B cell (primary cell): ENCODE measurements at regions of chr10 and their contacts with region 1.

Region 1: GRCh38 chr10:63629363-63630084 is 108.3 kb downstream of the REEP3 start:
- DNase-seq: peak; percentile 89
- ATAC-seq: peak; percentile 56
- H3K4me3 ChIP-seq: peak overlapping the region; percentile 65 to 88 (median 81)
- H3K4me3 Mint-ChIP-seq: peak overlapping the region; percentile 97
- H3K27ac ChIP-seq: peak overlapping the region; percentile 61 to 66
- H3K27ac Mint-ChIP-seq: peak overlapping the region; percentile 96
- H3K4me1 ChIP-seq: peaks cover 17 to 28% of the 10 kb centered on the region in 2 donors
- H3K4me1 Mint-ChIP-seq: peaks cover 24% of the 10 kb centered on the region
- H3K27me3 ChIP-seq: no peaks in the 10 kb centered on the region
- H3K27me3 Mint-ChIP-seq: no peaks in the 10 kb centered on the region
- CTCF ChIP-seq: peak; percentile 90

Region 2: DNA sequence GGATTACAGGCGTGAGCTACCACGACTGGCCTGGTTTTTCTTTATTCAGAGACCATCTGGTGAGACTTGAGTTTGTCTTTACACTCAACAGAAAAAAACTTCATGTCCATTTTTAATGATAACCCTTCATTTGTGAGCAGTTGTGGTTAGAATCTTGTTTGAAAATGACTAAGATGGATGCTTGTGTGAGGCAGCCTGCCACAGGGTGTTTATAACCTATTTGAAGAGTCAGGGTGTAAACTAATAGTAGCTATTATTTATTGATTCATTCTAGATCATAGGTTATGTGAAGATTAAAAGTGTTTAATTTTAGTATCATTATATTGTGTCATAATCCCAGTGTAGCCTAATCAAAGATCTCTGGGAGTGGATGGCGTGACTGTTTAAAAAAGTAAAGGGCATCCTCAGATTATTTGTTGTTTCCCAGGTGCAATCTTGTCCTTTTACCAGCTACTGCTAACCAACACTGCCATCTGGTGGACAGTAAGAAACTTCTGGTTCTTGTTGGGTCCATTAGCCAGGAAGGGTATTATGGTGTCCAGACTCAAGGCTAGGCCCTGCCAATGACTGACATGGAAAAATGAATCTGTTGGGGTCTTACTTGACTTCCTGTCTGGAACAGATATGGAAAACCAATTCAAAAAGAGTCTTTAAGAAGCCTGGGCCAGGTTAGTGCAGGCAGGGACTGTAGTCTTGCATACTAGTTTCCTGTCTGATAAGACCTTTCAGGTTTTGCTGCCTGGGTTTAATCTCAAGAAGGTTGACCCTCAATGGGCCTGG is 471.5 kb before region 1 on chr10:
- CTCF ChIA-PET with region 1: interaction called, 10 read pairs
- POLR2A ChIA-PET with region 1: no interaction called
- intact Hi-C with region 1: no loop called
- DNase-seq: peak; percentile 85
- ATAC-seq: peak; percentile 68
- H3K4me3 ChIP-seq: no peak overlapping the region
- H3K4me3 Mint-ChIP-seq: no peak overlapping the region
- H3K27ac ChIP-seq: no peak overlapping the region
- H3K27ac Mint-ChIP-seq: no peak overlapping the region
- H3K4me1 ChIP-seq: no peaks in the 10 kb centered on the region
- H3K4me1 Mint-ChIP-seq: peaks cover 9% of the 10 kb centered on the region
- H3K27me3 ChIP-seq: no peaks in the 10 kb centered on the region
- H3K27me3 Mint-ChIP-seq: no peaks in the 10 kb centered on the region
- CTCF ChIP-seq: peak; percentile 90

Region 3: GRCh38 chr10:63197344-63198106 is 432.0 kb before region 1 on chr10:
- CTCF ChIA-PET with region 1: interaction called, 16 read pairs
- POLR2A ChIA-PET with region 1: no interaction called
- intact Hi-C with region 1: no loop called
- DNase-seq: no peak
- ATAC-seq: no peak
- H3K4me3 ChIP-seq: no peak overlapping the region
- H3K4me3 Mint-ChIP-seq: no peak overlapping the region
- H3K27ac ChIP-seq: no peak overlapping the region
- H3K27ac Mint-ChIP-seq: peak overlapping the region; percentile 32
- H3K4me1 ChIP-seq: peaks cover 0 to 5% of the 10 kb centered on the region in 2 donors
- H3K4me1 Mint-ChIP-seq: peaks cover 8% of the 10 kb centered on the region
- H3K27me3 ChIP-seq: no peaks in the 10 kb centered on the region
- H3K27me3 Mint-ChIP-seq: no peaks in the 10 kb centered on the region
- CTCF ChIP-seq: no peak

Region 4: DNA sequence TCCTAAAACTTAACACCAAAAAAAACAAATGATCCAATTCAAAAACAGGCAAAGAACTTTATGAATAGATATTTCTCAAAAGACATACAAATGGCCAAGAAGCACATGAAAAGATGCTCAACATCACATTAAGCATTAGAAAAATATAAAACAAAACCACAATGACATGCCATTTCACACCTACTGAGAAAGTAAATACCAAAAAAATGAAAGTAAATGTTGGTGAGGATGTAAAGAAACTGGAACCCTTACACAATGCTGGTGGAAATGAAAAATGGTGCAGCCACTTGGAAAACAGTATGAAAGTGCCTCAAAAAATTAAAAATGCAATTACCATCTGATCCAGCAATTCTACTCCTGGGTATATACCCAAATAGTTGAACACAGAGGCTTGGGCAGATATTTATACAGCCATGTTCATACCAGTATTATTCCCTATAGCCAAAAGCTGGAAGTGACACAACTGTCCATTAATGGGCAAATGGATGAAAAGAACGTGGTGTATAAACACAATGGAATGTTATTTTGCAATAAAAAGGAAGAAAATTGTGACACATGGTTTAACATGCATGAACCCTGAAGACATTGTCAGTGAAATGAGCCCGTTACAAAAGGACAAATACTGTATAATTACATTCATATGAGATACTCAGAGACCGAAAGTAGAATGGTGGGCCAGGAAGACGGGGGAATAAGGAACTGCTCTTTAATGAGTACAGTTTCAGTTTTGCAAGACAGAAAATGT is 252.8 kb before region 1 on chr10:
- CTCF ChIA-PET with region 1: no interaction called
- POLR2A ChIA-PET with region 1: no interaction called
- intact Hi-C with region 1: loop called (anchors 2 kb)
- DNase-seq: peak; percentile 64
- ATAC-seq: peak; percentile 94
- H3K4me3 ChIP-seq: peak overlapping the region in 3 of 5 experiments; percentile 7 to 45 (median 40)
- H3K4me3 Mint-ChIP-seq: peak overlapping the region; percentile 59
- H3K27ac ChIP-seq: no peak overlapping the region
- H3K27ac Mint-ChIP-seq: peak overlapping the region; percentile 3
- H3K4me1 ChIP-seq: peaks cover 8 to 11% of the 10 kb centered on the region in 2 donors
- H3K4me1 Mint-ChIP-seq: peaks cover 17% of the 10 kb centered on the region
- H3K27me3 ChIP-seq: no peaks in the 10 kb centered on the region
- H3K27me3 Mint-ChIP-seq: no peaks in the 10 kb centered on the region
- CTCF ChIP-seq: no peak

Region 5: DNA sequence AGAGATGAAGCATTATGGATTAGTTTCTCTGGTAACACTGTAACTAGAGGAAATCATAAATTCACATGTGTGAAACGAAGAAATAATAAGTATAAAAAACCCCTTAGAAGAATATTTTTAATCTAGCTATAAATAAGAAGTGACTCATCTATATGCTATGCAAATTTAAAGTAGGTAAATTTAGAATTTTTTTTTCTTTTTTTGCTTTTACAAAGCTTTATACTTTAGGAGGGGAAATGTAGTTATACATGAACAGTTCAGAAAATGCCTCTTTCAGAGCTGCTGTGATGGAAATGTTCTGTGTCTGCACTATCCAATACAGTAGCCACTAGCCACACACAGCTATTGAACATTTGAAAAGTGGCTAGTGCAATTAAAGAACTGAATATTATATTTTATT is 21.0 kb before region 1 on chr10:
- CTCF ChIA-PET with region 1: interaction called, 4 read pairs
- POLR2A ChIA-PET with region 1: interaction called, 9 read pairs
- intact Hi-C with region 1: loop called (anchors 2 kb)
- DNase-seq: no peak
- ATAC-seq: peak; percentile 36
- H3K4me3 ChIP-seq: no peak overlapping the region
- H3K4me3 Mint-ChIP-seq: peak overlapping the region; percentile 65
- H3K27ac ChIP-seq: peak overlapping the region in 1 of 2 donors; percentile 28
- H3K27ac Mint-ChIP-seq: no peak overlapping the region
- H3K4me1 ChIP-seq: peaks cover 17 to 22% of the 10 kb centered on the region in 2 donors
- H3K4me1 Mint-ChIP-seq: peaks cover 28% of the 10 kb centered on the region
- H3K27me3 ChIP-seq: no peaks in the 10 kb centered on the region
- H3K27me3 Mint-ChIP-seq: no peaks in the 10 kb centered on the region
- CTCF ChIP-seq: no peak